Endothelial cell of umbilical vein (primary cell): ENCODE measurements at regions of chr3 and their contacts with region 1.

Region 1: GRCh38 chr3:128969993-128970739 is 23.7 kb downstream of the CFAP92 start:
- DNase-seq: peak; percentile 55
- H3K4me3 ChIP-seq: no peak overlapping the region
- H3K27ac ChIP-seq: no peak overlapping the region
- H3K4me1 ChIP-seq: no peaks in the 10 kb centered on the region
- H3K27me3 ChIP-seq: no peaks in the 10 kb centered on the region
- CTCF ChIP-seq: peak; percentile 80 to 89
- POLR2A ChIP-seq: no peak

Region 2: DNA sequence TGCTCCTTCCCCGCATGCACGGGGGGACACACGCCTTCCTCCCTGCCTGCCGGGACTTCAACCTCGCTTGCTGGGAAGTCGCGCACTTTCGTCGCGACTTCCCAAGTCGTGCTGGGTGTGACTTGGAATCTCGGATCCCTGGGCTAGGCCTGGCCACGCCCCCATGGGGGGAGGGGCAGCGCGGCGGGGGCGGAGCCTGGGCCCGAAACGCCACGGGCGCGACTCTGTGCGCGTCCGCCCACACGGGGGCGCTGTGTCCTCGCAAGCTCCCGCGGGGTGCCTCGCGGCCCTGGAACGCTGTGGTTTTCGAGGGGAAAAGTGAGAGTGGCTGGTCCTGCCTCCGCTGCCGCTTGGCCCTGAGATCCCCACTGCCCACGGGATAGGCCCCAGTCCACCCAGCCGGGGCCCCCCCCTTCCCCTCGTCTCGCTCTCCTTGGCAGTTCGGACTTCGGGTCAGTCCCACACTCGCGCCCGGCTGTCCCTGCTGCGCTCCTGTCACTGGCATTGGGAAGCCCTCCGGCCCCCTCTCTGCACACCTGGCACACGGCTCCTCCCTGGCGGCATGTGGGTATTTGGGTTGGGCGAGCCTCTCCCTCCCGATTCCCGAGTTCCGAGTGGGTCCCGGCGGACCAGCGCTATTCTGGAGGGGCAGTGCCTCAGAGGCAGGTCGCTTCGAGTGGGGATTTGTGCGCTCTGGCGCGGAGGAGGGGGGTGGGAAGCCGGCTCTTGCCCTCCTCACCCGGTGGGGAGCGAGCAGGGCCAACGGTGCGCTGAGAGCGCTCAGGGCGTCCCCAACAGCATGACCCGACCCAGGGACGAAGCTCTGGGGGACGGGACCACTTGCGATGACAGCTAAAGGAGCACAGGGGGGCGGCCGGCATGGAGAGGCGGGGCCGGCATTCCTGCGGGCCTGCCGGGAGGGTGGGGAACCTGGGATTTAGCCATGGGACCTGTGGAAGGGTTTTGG is 894.4 kb before region 1 on chr3:
- CTCF ChIA-PET with region 1: no interaction called
- POLR2A ChIA-PET with region 1: no interaction called
- dilution Hi-C with region 1: no loop called
- intact Hi-C with region 1: no loop called
- DNase-seq: peak; percentile 94
- H3K4me3 ChIP-seq: peak overlapping the region in 2 of 3 experiments; percentile 16 to 44
- H3K27ac ChIP-seq: peak overlapping the region; percentile 33
- H3K4me1 ChIP-seq: peaks cover 51% of the 10 kb centered on the region
- H3K27me3 ChIP-seq: no peaks in the 10 kb centered on the region
- CTCF ChIP-seq: peak; percentile 95 to 98
- POLR2A ChIP-seq: peak; percentile 55

Region 3: GRCh38 chr3:128524374-128525299 is 445.5 kb before region 1 on chr3:
- CTCF ChIA-PET with region 1: no interaction called
- POLR2A ChIA-PET with region 1: no interaction called
- dilution Hi-C with region 1: no loop called
- intact Hi-C with region 1: no loop called
- DNase-seq: no peak
- H3K4me3 ChIP-seq: no peak overlapping the region
- H3K27ac ChIP-seq: no peak overlapping the region
- H3K4me1 ChIP-seq: no peaks in the 10 kb centered on the region
- H3K27me3 ChIP-seq: peaks cover 39 to 51% of the 10 kb centered on the region in 2 experiments
- CTCF ChIP-seq: no peak
- POLR2A ChIP-seq: no peak

Region 4: DNA sequence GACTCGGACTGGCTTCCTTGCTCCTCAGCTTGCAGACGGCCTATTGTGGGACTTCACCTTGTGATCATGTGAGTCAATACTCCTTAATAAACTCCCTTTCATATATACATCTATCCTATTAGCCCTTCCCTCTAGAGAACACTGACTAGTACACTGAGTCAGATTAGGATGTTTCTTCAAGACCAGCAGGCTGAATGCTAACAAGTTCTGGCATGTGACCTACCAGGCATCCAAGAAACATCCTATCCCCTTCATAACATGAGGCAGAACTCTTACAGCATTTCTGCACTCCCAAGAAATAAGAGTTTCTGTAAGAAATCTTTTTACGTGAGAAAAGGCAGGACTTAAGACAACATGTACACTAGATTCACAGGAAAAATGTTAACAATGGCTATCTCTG is 14.4 kb after region 1 on chr3:
- CTCF ChIA-PET with region 1: interaction called, 35 read pairs
- POLR2A ChIA-PET with region 1: no interaction called
- dilution Hi-C with region 1: no loop called
- intact Hi-C with region 1: no loop called
- DNase-seq: no peak
- H3K4me3 ChIP-seq: no peak overlapping the region
- H3K27ac ChIP-seq: no peak overlapping the region
- H3K4me1 ChIP-seq: no peaks in the 10 kb centered on the region
- H3K27me3 ChIP-seq: peaks cover 0 to 2% of the 10 kb centered on the region in 2 experiments
- CTCF ChIP-seq: no peak
- POLR2A ChIP-seq: no peak

Region 5: GRCh38 chr3:129026728-129027543 is 56.8 kb after region 1 on chr3:
- CTCF ChIA-PET with region 1: interaction called, 37 read pairs
- POLR2A ChIA-PET with region 1: no interaction called
- dilution Hi-C with region 1: no loop called
- intact Hi-C with region 1: loop called (anchors 1 kb)
- DNase-seq: peak; percentile 91
- H3K4me3 ChIP-seq: peak overlapping the region; percentile 30 to 49 (median 45)
- H3K27ac ChIP-seq: no peak overlapping the region
- H3K4me1 ChIP-seq: peaks cover 10% of the 10 kb centered on the region
- H3K27me3 ChIP-seq: no peaks in the 10 kb centered on the region
- CTCF ChIP-seq: peak; percentile 70 to 86
- POLR2A ChIP-seq: peak; percentile 43

Region 6: GRCh38 chr3:129087138-129087702 is 117.1 kb after region 1 on chr3:
- CTCF ChIA-PET with region 1: interaction called, 13 read pairs
- POLR2A ChIA-PET with region 1: interaction called, 3 read pairs
- dilution Hi-C with region 1: no loop called
- intact Hi-C with region 1: loop called (anchors 2 kb)
- DNase-seq: peak; percentile 57
- H3K4me3 ChIP-seq: no peak overlapping the region
- H3K27ac ChIP-seq: peak overlapping the region; percentile 11
- H3K4me1 ChIP-seq: peaks cover 3% of the 10 kb centered on the region
- H3K27me3 ChIP-seq: no peaks in the 10 kb centered on the region
- CTCF ChIP-seq: no peak
- POLR2A ChIP-seq: no peak

Region 7: GRCh38 chr3:129132097-129132866 is 162.1 kb after region 1 on chr3:
- CTCF ChIA-PET with region 1: interaction called, 27 read pairs
- POLR2A ChIA-PET with region 1: no interaction called
- dilution Hi-C with region 1: no loop called
- intact Hi-C with region 1: no loop called
- DNase-seq: no peak
- H3K4me3 ChIP-seq: no peak overlapping the region
- H3K27ac ChIP-seq: no peak overlapping the region
- H3K4me1 ChIP-seq: no peaks in the 10 kb centered on the region
- H3K27me3 ChIP-seq: no peaks in the 10 kb centered on the region
- CTCF ChIP-seq: no peak
- POLR2A ChIP-seq: no peak

Region 8: DNA sequence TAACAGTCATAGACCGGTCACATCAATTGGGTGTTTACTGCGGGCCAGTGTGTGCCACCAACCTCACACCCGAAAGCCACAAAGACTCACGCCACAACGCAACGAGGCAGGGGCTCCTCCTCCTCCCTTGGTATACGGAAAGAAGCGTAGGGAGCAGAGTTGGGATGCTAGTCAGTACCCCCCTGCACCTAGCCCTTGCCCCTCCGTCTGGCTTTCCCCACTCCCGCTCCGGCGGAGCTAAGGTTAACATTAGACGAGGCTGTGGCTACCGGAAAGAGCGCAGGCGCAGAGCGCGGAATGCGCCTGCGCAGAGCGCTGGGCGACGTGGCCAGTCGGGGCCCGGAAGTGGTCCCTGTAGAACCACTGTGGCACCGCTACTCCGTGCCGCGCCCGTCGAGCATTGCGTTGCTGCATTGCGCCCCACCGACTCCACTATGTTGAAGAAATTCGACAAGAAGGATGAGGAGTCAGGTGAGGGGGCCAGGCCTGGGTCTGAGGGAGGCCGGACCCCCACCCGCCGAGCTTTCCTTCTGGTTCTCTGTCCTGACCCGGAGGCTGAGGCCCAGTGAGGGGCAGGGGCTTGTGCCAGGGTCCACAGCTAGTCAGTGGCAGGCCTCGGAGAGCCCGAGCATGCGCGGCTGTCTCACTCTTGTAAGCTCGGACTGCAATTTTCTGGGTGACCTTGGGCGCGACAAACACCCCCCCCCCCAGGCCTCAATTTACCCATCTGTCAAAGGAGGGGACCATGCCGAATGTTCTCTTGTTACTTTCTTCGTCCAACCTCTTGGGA is 279.3 kb after region 1 on chr3 and contains the start of gene COPG1:
- CTCF ChIA-PET with region 1: interaction called, 111 read pairs
- POLR2A ChIA-PET with region 1: no interaction called
- dilution Hi-C with region 1: no loop called
- intact Hi-C with region 1: loop called (anchors 1 kb)
- DNase-seq: peak; percentile 94
- H3K4me3 ChIP-seq: peak within 1 kb of the TSS; percentile 57 to 84 (median 83)
- H3K27ac ChIP-seq: peak within 1 kb of the TSS; percentile 67
- H3K4me1 ChIP-seq: peaks cover 17% of the 10 kb centered on the region
- H3K27me3 ChIP-seq: no peaks in the 10 kb centered on the region
- CTCF ChIP-seq: no peak
- POLR2A ChIP-seq: peak; percentile 98
- total RNA-seq, gene COPG1: 202 and 203 TPM in 2 replicates

Region 9: GRCh38 chr3:129893581-129894070 is 923.5 kb after region 1 on chr3 and contains the start of gene TMCC1:
- CTCF ChIA-PET with region 1: no interaction called
- POLR2A ChIA-PET with region 1: no interaction called
- dilution Hi-C with region 1: no loop called
- intact Hi-C with region 1: no loop called
- DNase-seq: peak; percentile 78
- H3K4me3 ChIP-seq: peak within 1 kb of the TSS; percentile 54 to 91 (median 89)
- H3K27ac ChIP-seq: peak within 1 kb of the TSS; percentile 89
- H3K4me1 ChIP-seq: peaks cover 47% of the 10 kb centered on the region
- H3K27me3 ChIP-seq: no peaks in the 10 kb centered on the region
- CTCF ChIP-seq: no peak
- POLR2A ChIP-seq: peak; percentile 54
- total RNA-seq, gene TMCC1: 36.6 and 38.4 TPM in 2 replicates